Left cardiac atrium (tissue), 4 donors: ENCODE measurements at regions of chr6 and their contacts with region 1.

Region 1: GRCh38 chr6:155530219-155530834 is 74.7 kb upstream of the NOX3 start:
- DNase-seq: no peak
- ATAC-seq: no peak

Region 2: GRCh38 chr6:155327326-155328073 is 202.8 kb before region 1 on chr6:
- intact Hi-C with region 1: loop called in 1 of 2 experiments (anchors 1 kb)
- DNase-seq: peak; percentile 36
- ATAC-seq: peak in 1 of 2 donors; percentile 58